Panc1 (cell line): ENCODE measurements at regions of chr12 and their contacts with region 1.

Region 1: DNA sequence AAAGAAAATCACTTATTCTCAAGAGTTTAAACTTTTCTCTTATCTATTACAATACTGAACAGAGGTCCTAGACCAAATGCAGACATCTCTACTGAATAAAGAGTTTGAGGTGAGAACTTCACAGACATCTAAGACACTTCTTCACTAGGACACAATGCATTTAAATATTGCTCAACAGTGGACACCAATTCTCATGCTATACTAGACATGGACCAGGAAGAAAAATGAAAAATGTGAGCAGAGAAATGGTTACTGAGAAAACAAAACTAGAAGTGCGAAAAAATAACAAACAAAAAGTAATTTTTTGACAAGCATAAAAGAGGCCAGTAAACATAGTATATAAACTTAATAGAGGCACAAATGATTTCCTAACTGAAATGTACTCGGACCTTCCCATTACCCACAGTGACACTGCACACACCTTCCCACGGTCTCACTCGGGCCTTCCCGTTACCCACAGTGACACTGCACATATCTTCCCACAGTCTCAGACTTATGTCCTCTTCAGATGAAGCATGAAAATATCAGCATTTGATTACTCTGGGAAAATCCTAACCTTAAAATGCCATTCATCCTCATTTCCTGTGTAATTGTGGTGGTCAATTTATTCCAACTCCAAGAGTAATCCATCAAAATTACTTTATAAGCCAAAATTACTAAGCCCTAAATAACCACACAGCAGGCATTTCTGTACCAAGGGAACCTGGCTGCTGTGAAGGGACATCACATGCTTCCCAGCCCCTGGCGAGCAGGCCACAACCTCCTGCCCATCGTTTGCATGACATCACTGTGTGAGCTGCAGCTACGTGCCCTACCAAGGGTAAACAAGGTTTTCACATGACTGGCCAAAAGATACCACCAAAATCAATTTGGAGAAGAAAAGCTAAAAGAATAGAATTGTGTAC is 6.4 kb downstream of the SLC15A4 start:
- DNase-seq: no peak
- ATAC-seq: peak; percentile 61; the same call in 1 of the 2 replicates
- H3K4me3 ChIP-seq: no peak overlapping the region
- H3K27ac ChIP-seq: no peak overlapping the region
- H3K4me1 ChIP-seq: peaks cover 21% of the 10 kb centered on the region
- H3K27me3 ChIP-seq: no peaks in the 10 kb centered on the region
- CTCF ChIP-seq: no peak

Region 2: GRCh38 chr12:128914908-128915563 is 97.7 kb after region 1 on chr12:
- CTCF ChIA-PET with region 1: no interaction called
- POLR2A ChIA-PET with region 1: no interaction called
- in situ Hi-C with region 1: no loop called
- intact Hi-C with region 1: no loop called
- DNase-seq: no peak
- ATAC-seq: no peak
- H3K4me3 ChIP-seq: no peak overlapping the region
- H3K27ac ChIP-seq: no peak overlapping the region
- H3K4me1 ChIP-seq: no peaks in the 10 kb centered on the region
- H3K27me3 ChIP-seq: no peaks in the 10 kb centered on the region
- CTCF ChIP-seq: no peak

Region 3: GRCh38 chr12:129009833-129010622 is 192.7 kb after region 1 on chr12:
- CTCF ChIA-PET with region 1: interaction called, 14 read pairs
- POLR2A ChIA-PET with region 1: no interaction called
- in situ Hi-C with region 1: no loop called
- intact Hi-C with region 1: no loop called
- DNase-seq: no peak
- ATAC-seq: no peak
- H3K4me3 ChIP-seq: no peak overlapping the region
- H3K27ac ChIP-seq: no peak overlapping the region
- H3K4me1 ChIP-seq: no peaks in the 10 kb centered on the region
- H3K27me3 ChIP-seq: no peaks in the 10 kb centered on the region
- CTCF ChIP-seq: no peak